HEK293T (cell line): ENCODE measurements at regions of chr19 and their contacts with region 1.

Region 1: GRCh38 chr19:5622463-5623396 is at the starts of genes SAFB and SAFB2:
- DNase-seq: peak; percentile 99

Region 2: GRCh38 chr19:5690125-5690954 is 67.6 kb after region 1 on chr19 and contains the start of gene RPL36:
- CTCF ChIA-PET with region 1: interaction called, 5 read pairs
- POLR2A ChIA-PET with region 1: interaction called, 11 read pairs
- DNase-seq: peak; percentile 92

Region 3: GRCh38 chr19:5738426-5738825 is 115.7 kb after region 1 on chr19:
- CTCF ChIA-PET with region 1: no interaction called
- POLR2A ChIA-PET with region 1: no interaction called
- DNase-seq: no peak